ENCODE measurements at regions of chrX and their contacts with region 1.

Region 1: DNA sequence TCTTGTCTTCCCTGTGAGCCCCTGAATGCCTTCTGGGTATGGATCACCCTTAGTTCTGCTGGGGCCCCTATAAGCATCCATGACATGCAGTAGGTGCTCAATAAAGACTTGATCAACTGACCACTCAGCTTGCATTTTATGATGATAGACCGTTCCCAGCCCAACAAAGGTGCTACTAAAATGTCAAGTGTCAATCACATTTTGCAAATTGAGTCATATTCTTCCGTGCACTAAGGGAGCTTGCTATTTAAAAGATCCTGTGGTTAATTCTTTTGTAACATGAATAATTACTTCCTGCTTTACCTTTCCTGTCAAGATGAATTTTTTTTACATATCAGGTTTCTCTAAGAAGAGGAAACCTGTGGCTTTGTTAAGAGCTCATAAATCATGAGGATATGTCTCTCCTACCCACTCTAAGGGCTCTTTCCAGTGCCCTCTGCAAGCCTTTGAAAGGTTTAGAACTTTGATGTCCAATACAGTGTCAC is 47.6 kb downstream of the SH3KBP1 start:
- DNase-seq: no peak
- H3K4me3 ChIP-seq: no peak overlapping the region
- H3K27ac ChIP-seq: no peak overlapping the region
- H3K4me1 ChIP-seq: no peaks in the 10 kb centered on the region
- H3K27me3 ChIP-seq: no peaks in the 10 kb centered on the region
- CTCF ChIP-seq: no peak

Region 2: GRCh38 chrX:20042221-20042620 is 202.4 kb after region 1 on chrX:
- CTCF ChIA-PET with region 1: interaction called, 17 read pairs
- POLR2A ChIA-PET with region 1: no interaction called
- intact Hi-C with region 1: no loop called
- DNase-seq: no peak
- H3K4me3 ChIP-seq: no peak overlapping the region
- H3K27ac ChIP-seq: no peak overlapping the region
- H3K4me1 ChIP-seq: no peaks in the 10 kb centered on the region
- H3K27me3 ChIP-seq: no peaks in the 10 kb centered on the region
- CTCF ChIP-seq: no peak

Measured in A673 (cell line).